ENCODE measurements at regions of chr6 and their contacts with region 1.

Region 1: DNA sequence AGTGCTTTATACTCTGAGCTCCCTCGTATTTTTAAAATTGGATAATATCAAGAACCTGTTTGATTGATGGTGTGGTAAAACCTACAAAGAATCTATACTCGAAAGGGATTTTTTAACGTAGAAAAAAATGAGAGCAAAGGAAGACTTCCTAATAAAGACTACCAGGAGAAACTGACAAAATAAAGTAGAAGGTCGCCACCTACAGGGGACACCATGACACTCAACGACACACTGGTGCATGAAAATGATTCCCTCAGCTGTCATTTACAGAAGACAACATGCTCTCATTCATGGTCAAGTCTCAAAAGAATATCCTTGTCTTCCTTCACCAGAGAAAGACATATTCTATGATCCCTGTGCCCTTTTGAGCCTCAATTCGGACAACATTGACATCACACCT is 10.1 kb upstream of the NHSL1 start:
- DNase-seq: no peak
- ATAC-seq: peak in 1 of 4 donors; percentile 64
- H3K4me3 ChIP-seq: no peak overlapping the region
- H3K27ac ChIP-seq: no peak overlapping the region
- H3K4me1 ChIP-seq: no peaks in the 10 kb centered on the region
- H3K27me3 ChIP-seq: no peaks in the 10 kb centered on the region
- CTCF ChIP-seq: peak; percentile 51

Region 2: DNA sequence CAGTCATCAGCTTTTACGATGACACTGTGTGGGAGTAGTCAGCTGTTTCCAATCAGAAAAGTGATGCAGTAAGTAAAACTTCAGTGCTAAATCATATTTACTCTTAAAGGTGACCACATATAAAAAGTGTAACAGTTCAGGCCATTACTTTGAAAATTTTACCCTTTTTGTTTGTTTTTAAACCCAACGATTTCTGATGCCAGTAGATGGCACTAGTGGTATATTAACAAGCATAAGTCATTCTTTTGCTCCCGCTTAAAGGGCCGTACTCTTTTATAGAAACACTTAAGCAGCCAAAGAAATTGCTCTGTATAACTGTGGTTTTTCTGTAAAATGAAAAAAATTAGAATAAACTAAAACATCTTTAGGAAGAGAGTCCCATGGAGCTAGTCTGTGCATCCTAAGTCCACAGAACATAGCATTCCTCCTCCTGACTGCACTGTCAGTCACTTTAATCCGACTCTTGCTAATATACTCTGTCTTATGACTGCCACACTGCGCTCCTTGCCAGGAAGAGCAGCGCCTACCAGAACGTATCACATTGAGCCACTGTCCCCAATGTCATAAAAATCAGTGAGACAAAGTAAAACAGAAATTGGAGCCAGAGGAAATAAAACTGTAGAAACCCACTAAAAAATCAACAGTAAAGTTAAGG is 80.3 kb before region 1 on chr6:
- intact Hi-C with region 1: loop called in 1 of 2 experiments (anchors 2 kb)
- DNase-seq: no peak
- ATAC-seq: peak in 2 of 4 donors; percentile 55 to 69
- H3K4me3 ChIP-seq: no peak overlapping the region
- H3K27ac ChIP-seq: no peak overlapping the region
- H3K4me1 ChIP-seq: no peaks in the 10 kb centered on the region
- H3K27me3 ChIP-seq: peaks cover 0 to 1% (median 0%) of the 10 kb centered on the region in 3 donors
- CTCF ChIP-seq: peak; percentile 51

Region 3: DNA sequence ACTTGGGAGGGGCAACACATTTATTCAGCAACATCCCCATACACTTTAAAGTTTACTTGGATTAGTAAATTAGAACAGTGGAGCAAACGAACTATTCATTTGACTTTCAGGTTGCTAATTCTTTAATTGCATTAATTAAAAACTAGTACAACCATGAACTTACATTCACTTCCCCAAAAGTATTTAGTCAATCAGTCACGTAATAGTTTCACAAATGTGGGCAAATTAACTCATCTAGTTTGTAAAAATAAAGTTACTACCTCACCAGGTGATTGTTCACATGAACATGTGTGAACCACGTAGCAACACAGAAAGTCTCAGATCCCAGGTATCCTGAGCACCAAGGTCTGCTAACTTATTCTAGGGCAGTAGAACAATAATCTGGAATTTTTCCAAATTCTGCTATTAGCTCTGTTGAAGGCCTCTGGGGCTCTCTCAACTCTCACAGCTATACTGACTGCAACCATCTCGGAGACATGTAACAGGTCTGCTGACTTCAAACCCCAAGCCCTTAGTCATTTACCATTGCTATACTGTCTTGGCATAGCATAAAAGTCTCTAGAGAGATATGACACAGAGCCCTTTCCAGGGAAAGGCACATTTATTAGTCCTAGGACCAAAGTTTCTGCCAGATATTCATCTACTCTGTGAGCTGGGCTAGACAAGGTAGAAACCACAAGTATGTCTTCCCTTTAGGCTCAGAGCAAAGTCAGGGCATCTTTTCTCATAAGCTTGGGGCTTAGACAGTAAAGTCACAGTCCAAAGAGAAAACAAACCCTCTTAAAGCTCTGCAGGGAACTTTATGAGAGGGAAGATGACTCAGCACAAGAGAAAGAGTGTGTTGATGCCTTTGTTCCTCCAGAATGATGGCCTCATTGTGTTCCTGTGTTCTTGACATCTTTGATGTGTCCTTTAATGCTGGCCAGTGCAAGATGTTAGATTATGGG is 213.3 kb after region 1 on chr6:
- intact Hi-C with region 1: no loop called
- DNase-seq: no peak
- ATAC-seq: no peak
- H3K4me3 ChIP-seq: no peak overlapping the region
- H3K27ac ChIP-seq: no peak overlapping the region
- H3K4me1 ChIP-seq: no peaks in the 10 kb centered on the region
- H3K27me3 ChIP-seq: no peaks in the 10 kb centered on the region
- CTCF ChIP-seq: no peak